CD4-positive, alpha-beta T cell (primary cell): ENCODE measurements at regions of chr11 and their contacts with region 1.

Region 1: GRCh38 chr11:42003801-42004200 is 544.3 kb upstream of the LRRC4C start:
- DNase-seq: no peak
- ATAC-seq: no peak
- H3K4me3 ChIP-seq: no peak overlapping the region
- H3K4me3 Mint-ChIP-seq: no peak overlapping the region
- H3K27ac ChIP-seq: no peak overlapping the region
- H3K27ac Mint-ChIP-seq: no peak overlapping the region
- H3K4me1 ChIP-seq: no peaks in the 10 kb centered on the region
- H3K4me1 Mint-ChIP-seq: no peaks in the 10 kb centered on the region
- H3K27me3 ChIP-seq: no peaks in the 10 kb centered on the region
- H3K27me3 Mint-ChIP-seq: no peaks in the 10 kb centered on the region
- CTCF ChIP-seq: no peak

Region 2: DNA sequence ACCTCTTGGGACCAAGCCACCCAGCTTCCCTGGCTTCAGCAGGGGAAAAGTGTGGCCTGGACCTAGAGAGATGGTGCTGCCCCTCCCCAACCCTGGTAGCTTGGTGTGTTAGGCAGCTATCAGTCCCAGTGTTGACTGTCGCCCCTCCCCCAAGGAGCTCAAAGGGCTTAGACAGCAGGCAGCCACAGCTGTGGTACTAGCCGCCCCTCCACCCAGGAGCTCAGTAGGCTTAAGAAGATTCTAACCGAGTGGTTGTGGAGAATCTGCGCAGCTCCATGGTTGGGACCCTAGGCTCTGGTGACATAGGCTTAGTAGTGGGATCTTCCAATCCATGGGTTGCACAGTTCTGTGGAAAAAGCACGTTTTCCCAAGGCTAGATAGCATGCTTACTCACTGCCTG is 85.9 kb before region 1 on chr11:
- CTCF ChIA-PET with region 1: no interaction called
- POLR2A ChIA-PET with region 1: no interaction called
- intact Hi-C with region 1: no loop called
- DNase-seq: no peak
- ATAC-seq: no peak
- H3K4me3 ChIP-seq: no peak overlapping the region
- H3K4me3 Mint-ChIP-seq: no peak overlapping the region
- H3K27ac ChIP-seq: no peak overlapping the region
- H3K27ac Mint-ChIP-seq: no peak overlapping the region
- H3K4me1 ChIP-seq: no peaks in the 10 kb centered on the region
- H3K4me1 Mint-ChIP-seq: no peaks in the 10 kb centered on the region
- H3K27me3 ChIP-seq: no peaks in the 10 kb centered on the region
- H3K27me3 Mint-ChIP-seq: no peaks in the 10 kb centered on the region
- CTCF ChIP-seq: no peak

Region 3: DNA sequence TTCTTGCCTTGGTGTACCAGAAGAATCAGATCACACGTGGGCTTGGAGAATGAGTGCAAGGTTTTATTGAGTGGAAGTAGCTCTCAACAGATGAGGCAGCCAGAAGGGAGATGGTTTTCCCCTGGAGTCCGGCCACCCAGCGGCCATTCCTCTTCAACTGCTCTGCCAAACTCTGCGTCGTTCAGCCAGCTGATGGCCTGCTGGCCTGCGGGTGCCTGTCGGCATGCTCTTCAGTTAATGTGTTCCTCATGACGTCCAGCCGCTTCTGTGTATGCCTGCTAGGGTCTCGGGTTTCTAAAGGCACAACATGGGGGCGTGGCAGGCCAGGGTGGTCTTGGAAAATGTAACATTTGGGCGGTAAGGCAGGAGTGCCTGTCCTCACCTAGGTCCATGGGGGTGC is 56.4 kb before region 1 on chr11:
- CTCF ChIA-PET with region 1: no interaction called
- POLR2A ChIA-PET with region 1: no interaction called
- intact Hi-C with region 1: loop called in 1 of 2 experiments (anchors 10 kb)
- DNase-seq: no peak
- ATAC-seq: no peak
- H3K4me3 ChIP-seq: no peak overlapping the region
- H3K4me3 Mint-ChIP-seq: no peak overlapping the region
- H3K27ac ChIP-seq: no peak overlapping the region
- H3K27ac Mint-ChIP-seq: no peak overlapping the region
- H3K4me1 ChIP-seq: no peaks in the 10 kb centered on the region
- H3K4me1 Mint-ChIP-seq: no peaks in the 10 kb centered on the region
- H3K27me3 ChIP-seq: no peaks in the 10 kb centered on the region
- H3K27me3 Mint-ChIP-seq: no peaks in the 10 kb centered on the region
- CTCF ChIP-seq: no peak

Region 4: DNA sequence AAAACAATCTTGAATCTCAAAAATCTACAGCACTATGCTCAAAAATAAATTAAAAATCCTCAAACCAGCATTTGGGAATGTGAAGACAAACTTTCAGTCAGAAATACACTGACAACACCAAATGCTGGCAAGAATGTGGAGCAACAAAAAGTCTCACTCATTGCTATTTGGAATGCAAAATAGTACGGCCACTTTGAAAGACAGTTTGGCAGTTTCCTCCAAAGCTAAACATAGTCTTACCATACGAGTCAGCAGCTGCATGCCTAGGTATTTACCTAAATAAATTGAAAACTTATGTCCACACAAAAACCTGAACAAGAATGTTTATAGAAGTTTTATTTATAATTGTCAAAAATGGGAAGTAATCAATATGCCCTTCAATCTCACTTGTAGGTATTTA is 359.9 kb after region 1 on chr11:
- CTCF ChIA-PET with region 1: no interaction called
- POLR2A ChIA-PET with region 1: no interaction called
- intact Hi-C with region 1: no loop called
- DNase-seq: no peak
- ATAC-seq: no peak
- H3K4me3 ChIP-seq: no peak overlapping the region
- H3K4me3 Mint-ChIP-seq: no peak overlapping the region
- H3K27ac ChIP-seq: no peak overlapping the region
- H3K27ac Mint-ChIP-seq: no peak overlapping the region
- H3K4me1 ChIP-seq: no peaks in the 10 kb centered on the region
- H3K4me1 Mint-ChIP-seq: no peaks in the 10 kb centered on the region
- H3K27me3 ChIP-seq: no peaks in the 10 kb centered on the region
- H3K27me3 Mint-ChIP-seq: no peaks in the 10 kb centered on the region
- CTCF ChIP-seq: no peak